ENCODE measurements at regions of chr3 and their contacts with region 1.

Region 1: DNA sequence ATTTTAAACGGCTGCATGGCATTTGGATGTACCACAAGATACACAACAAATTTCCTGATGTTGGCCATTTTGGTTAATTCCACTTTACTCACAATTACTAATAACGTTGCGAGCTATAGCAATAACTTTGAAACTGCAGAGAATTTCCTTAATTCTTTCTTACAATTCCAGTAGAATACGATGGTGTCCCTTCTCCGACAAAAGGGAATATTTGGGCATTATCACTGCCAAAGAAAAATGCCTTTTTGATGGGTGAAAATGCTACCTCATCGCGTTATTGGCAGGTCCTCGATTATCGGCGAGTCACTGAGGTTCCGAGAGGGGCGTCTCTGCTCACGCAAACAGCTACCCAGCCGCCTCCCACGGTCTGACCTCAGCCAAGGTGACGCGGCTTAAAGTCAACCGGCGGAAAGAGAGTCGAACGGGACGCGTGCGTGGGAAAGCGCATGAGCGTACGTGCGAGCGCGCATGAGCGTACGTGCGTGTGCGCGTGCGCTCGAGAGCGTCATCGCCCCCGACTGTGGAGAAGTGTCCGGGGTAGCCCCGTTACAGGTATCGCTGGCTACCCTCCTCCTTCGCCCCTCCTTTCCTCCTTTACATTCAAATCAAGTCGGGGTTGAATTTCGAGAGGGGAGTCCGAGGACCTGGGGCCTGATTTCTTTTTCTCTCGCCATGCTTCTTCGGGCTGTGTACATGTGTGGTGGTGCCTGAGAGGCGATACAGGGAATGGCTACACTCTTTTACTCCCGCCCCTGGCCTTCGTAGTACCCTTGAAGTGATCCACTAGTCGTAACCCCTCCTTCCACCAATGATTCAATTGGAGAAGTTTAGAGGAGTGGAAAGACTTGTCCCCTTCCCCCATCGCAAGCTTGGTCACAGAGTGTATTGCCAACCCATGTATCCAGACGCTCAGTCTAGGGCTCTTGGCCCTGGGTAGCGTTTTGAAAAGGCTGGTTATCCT is at the start of gene OXSM:
- DNase-seq: peak; percentile 97
- H3K4me3 Mint-ChIP-seq: peak within 1 kb of the TSS; percentile 90
- H3K27ac Mint-ChIP-seq: peak within 1 kb of the TSS; percentile 99
- H3K4me1 Mint-ChIP-seq: peaks cover 54% of the 10 kb centered on the region
- H3K27me3 Mint-ChIP-seq: peaks cover 2% of the 10 kb centered on the region
- total RNA-seq, gene OXSM: 13.3 and 16.3 TPM in 2 replicates

Region 2: DNA sequence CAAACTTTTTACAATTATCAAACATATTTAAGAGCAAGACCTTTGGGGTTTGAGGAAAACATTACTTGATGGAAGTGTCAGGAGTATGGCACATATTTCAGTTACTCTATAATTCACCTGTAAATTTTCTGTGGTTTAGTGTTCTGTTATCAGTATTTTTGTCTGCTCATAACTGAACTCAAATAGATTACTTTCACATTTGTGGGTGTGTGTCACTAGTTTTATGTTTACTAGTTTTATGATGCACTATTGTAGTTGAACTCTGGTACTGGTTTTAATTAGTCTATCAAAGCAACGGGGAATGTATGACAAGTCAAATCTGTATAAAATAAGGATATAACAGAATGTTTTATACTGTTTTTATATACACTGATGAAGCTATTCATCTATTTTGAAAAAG is 27.2 kb after region 1 on chr3:
- intact Hi-C with region 1: loop called (anchors 2 kb)
- DNase-seq: no peak
- H3K4me3 Mint-ChIP-seq: no peak overlapping the region
- H3K27ac Mint-ChIP-seq: no peak overlapping the region
- H3K4me1 Mint-ChIP-seq: peaks cover 8% of the 10 kb centered on the region
- H3K27me3 Mint-ChIP-seq: no peaks in the 10 kb centered on the region

Region 3: DNA sequence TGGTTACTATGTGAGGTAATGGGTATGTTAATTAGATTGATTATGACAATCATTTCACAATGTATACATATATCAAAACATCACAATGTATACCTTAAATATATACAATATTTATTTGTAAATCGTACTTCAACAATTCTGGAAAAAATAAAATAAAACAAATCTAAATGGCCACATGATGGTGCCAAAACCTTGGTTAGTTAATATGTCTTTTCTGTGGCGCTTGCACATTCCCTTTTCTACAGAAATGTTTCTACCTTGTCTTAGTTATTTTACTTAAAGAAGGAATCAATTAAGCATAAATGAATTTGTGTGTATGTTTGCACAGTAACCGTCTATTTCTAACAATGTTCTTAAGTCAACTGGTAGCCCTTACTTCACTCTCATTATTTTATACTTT is 53.5 kb after region 1 on chr3:
- intact Hi-C with region 1: no loop called
- DNase-seq: no peak
- H3K4me3 Mint-ChIP-seq: no peak overlapping the region
- H3K27ac Mint-ChIP-seq: no peak overlapping the region
- H3K4me1 Mint-ChIP-seq: no peaks in the 10 kb centered on the region
- H3K27me3 Mint-ChIP-seq: peaks cover 12% of the 10 kb centered on the region

Region 4: GRCh38 chr3:25856902-25857518 is 67.1 kb after region 1 on chr3:
- intact Hi-C with region 1: loop called (anchors 2 kb)
- DNase-seq: peak; percentile 73
- H3K4me3 Mint-ChIP-seq: no peak overlapping the region
- H3K27ac Mint-ChIP-seq: no peak overlapping the region
- H3K4me1 Mint-ChIP-seq: peaks cover 2% of the 10 kb centered on the region
- H3K27me3 Mint-ChIP-seq: no peaks in the 10 kb centered on the region

Measured in activated CD4-positive, alpha-beta T cell treated with anti-CD3 and anti-CD28 coated beads, Interleukin-2, amount 10 ng/mL, durations not matched to agents 24 days and 14 days (primary cell).